Lower lobe of right lung (tissue), 2 donors: ENCODE measurements at regions of chr2 and their contacts with region 1.

Region 1: GRCh38 chr2:152627351-152627957 is 89.8 kb downstream of the PRPF40A start:
- DNase-seq: no peak
- ATAC-seq: peak; percentile 58 to 67
- H3K4me3 ChIP-seq: no peak overlapping the region
- H3K27ac ChIP-seq: no peak overlapping the region
- H3K4me1 ChIP-seq: no peaks in the 10 kb centered on the region
- H3K27me3 ChIP-seq: no peaks in the 10 kb centered on the region
- CTCF ChIP-seq: peak; percentile 50

Region 2: GRCh38 chr2:152189622-152190495 is 437.6 kb before region 1 on chr2:
- intact Hi-C with region 1: loop called (anchors 10 kb)
- DNase-seq: no peak
- ATAC-seq: peak; percentile 84 to 85
- H3K4me3 ChIP-seq: no peak overlapping the region
- H3K27ac ChIP-seq: no peak overlapping the region
- H3K4me1 ChIP-seq: no peaks in the 10 kb centered on the region
- H3K27me3 ChIP-seq: no peaks in the 10 kb centered on the region
- CTCF ChIP-seq: peak; percentile 74